A673 (cell line): ENCODE measurements at regions of chr19 and their contacts with region 1.

Region 1: DNA sequence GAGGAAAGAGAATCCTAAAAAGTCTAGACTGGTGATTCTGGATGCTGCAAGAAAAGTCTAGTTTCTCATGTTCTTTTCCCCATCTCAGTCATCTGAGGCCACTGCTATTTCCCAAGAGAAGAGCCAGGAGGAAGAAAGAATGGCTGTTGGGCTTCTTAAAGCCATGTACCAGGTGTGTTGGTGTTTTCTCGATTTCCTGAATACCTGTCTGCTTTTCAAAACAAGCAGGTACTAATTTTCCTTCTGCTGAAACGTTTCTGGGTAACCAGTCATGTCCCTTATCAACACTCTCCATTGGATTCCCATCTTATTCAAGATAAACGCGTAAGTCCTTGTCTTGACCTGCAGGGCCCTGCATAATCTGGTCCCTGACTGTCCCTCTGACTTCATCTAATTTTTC is 1.1 kb downstream of the ZNF570 start:
- DNase-seq: no peak
- H3K4me3 ChIP-seq: peak overlapping the region; percentile 65
- H3K27ac ChIP-seq: no peak overlapping the region
- H3K4me1 ChIP-seq: peaks cover 2% of the 10 kb centered on the region
- H3K27me3 ChIP-seq: no peaks in the 10 kb centered on the region
- CTCF ChIP-seq: no peak

Region 2: GRCh38 chr19:36573020-36573885 is 897.0 kb before region 1 on chr19 and contains the start of gene ZNF529:
- CTCF ChIA-PET with region 1: no interaction called
- POLR2A ChIA-PET with region 1: interaction called, 18 read pairs
- intact Hi-C with region 1: no loop called
- DNase-seq: peak; percentile 91
- H3K4me3 ChIP-seq: peak within 1 kb of the TSS; percentile 82
- H3K27ac ChIP-seq: peak within 1 kb of the TSS; percentile 83
- H3K4me1 ChIP-seq: no peaks in the 10 kb centered on the region
- H3K27me3 ChIP-seq: no peaks in the 10 kb centered on the region
- CTCF ChIP-seq: no peak
- total RNA-seq, gene ZNF529: 17.8 and 19.0 TPM in 2 replicates

Region 3: DNA sequence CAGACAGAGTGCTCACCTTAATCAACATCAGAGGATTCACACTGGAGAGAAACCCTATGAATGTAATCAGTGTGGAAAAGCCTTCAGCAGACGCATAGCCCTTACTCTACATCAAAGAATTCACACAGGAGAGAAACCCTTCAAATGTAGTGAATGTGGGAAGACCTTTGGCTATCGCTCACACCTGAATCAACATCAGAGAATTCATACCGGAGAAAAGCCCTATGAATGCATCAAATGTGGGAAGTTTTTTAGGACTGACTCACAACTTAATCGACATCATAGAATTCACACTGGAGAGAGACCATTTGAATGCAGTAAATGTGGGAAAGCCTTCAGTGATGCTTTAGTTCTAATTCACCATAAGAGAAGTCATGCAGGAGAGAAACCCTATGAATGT is 81.0 kb before region 1 on chr19:
- CTCF ChIA-PET with region 1: no interaction called
- POLR2A ChIA-PET with region 1: no interaction called
- intact Hi-C with region 1: no loop called
- DNase-seq: no peak
- H3K4me3 ChIP-seq: no peak overlapping the region
- H3K27ac ChIP-seq: no peak overlapping the region
- H3K4me1 ChIP-seq: no peaks in the 10 kb centered on the region
- H3K27me3 ChIP-seq: no peaks in the 10 kb centered on the region
- CTCF ChIP-seq: no peak